GM12878 (cell line): ENCODE measurements at regions of chr11 and their contacts with region 1.

Region 1: GRCh38 chr11:46489661-46490560 is 98.3 kb upstream of the CHRM4 start:
- DNase-seq: no peak
- ATAC-seq: peak; percentile 93
- H3K4me3 ChIP-seq: no peak overlapping the region
- H3K27ac ChIP-seq: peak overlapping the region; percentile 37; the same call in 1 of the 2 replicates
- H3K4me1 ChIP-seq: peaks cover 8% of the 10 kb centered on the region
- H3K27me3 ChIP-seq: no peaks in the 10 kb centered on the region
- CTCF ChIP-seq: peak; percentile 68 to 80 (median 68)
- EP300 ChIP-seq: no peak
- POLR2A ChIP-seq: no peak
- RAD21 ChIP-seq: peak; percentile 62

Region 2: GRCh38 chr11:46200537-46201281 is 289.2 kb before region 1 on chr11:
- CTCF ChIA-PET with region 1: no interaction called
- POLR2A ChIA-PET with region 1: no interaction called
- RAD21 ChIA-PET with region 1: no interaction called
- SMC1A ChIA-PET with region 1: no interaction called
- in situ Hi-C with region 1: no loop called
- intact Hi-C with region 1: no loop called
- DNase-seq: no peak
- ATAC-seq: no peak
- H3K4me3 ChIP-seq: no peak overlapping the region
- H3K27ac ChIP-seq: no peak overlapping the region
- H3K4me1 ChIP-seq: no peaks in the 10 kb centered on the region
- H3K27me3 ChIP-seq: peaks cover 2 to 3% of the 10 kb centered on the region in 2 experiments; a peak in 3 of 4 replicates
- CTCF ChIP-seq: no peak
- EP300 ChIP-seq: no peak
- POLR2A ChIP-seq: no peak
- RAD21 ChIP-seq: no peak

Region 3: DNA sequence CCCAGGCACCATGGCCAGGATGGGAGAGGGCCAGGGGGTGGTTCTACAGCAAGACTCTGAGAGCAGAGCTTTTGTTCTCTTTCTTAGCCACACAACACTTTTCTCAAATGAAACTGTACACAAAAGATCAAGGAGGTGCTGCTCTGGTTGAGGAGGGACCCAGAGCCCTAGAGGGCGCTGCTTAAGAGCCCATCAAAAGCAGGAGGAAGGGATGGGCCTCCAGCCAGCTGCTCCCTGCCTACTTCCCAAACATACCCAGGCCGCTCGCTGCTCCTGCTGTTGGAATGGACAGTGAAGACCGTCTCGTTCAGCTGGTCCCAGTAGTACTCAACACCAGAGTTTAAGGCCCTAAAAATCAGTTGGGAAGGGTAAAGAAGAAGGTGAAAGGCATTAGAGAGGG is 79.9 kb before region 1 on chr11:
- CTCF ChIA-PET with region 1: interaction called, 6 read pairs
- POLR2A ChIA-PET with region 1: interaction called, 3 read pairs
- RAD21 ChIA-PET with region 1: interaction called, 11 read pairs
- SMC1A ChIA-PET with region 1: interaction called, 7 read pairs
- in situ Hi-C with region 1: no loop called
- intact Hi-C with region 1: no loop called
- DNase-seq: no peak
- ATAC-seq: no peak
- H3K4me3 ChIP-seq: no peak overlapping the region
- H3K27ac ChIP-seq: no peak overlapping the region
- H3K4me1 ChIP-seq: no peaks in the 10 kb centered on the region
- H3K27me3 ChIP-seq: no peaks in the 10 kb centered on the region
- CTCF ChIP-seq: peak in 1 of 3 experiments; percentile 26; a peak in 1 of 6 replicates
- EP300 ChIP-seq: no peak
- POLR2A ChIP-seq: no peak
- RAD21 ChIP-seq: peak; percentile 8; the same call in 1 of the 2 replicates

Region 4: DNA sequence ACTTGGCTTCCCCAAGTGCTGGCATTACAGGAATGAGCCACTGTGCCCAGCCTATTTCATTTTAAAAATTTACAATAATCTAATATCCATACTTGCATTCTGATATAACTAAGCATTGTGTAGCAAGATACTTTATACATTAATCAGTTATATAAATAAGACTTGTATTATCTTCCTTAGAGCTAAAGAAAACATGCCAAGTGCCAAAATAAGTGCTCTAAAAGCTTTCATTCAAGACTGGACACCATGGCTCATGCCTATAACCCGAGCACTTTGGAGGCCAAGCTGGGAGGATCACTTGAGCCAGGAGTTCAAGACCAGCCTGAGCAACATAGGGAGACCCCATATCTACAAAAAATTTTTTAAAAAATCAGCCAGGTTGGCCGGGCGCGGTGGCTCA is 20.0 kb before region 1 on chr11:
- CTCF ChIA-PET with region 1: interaction called, 4 read pairs
- POLR2A ChIA-PET with region 1: interaction called, 4 read pairs
- RAD21 ChIA-PET with region 1: no interaction called
- SMC1A ChIA-PET with region 1: interaction called, 11 read pairs
- in situ Hi-C with region 1: no loop called
- intact Hi-C with region 1: no loop called
- DNase-seq: no peak
- ATAC-seq: no peak
- H3K4me3 ChIP-seq: no peak overlapping the region
- H3K27ac ChIP-seq: no peak overlapping the region
- H3K4me1 ChIP-seq: no peaks in the 10 kb centered on the region; the same call in 1 of the 2 replicates
- H3K27me3 ChIP-seq: no peaks in the 10 kb centered on the region
- CTCF ChIP-seq: no peak
- EP300 ChIP-seq: no peak
- POLR2A ChIP-seq: no peak
- RAD21 ChIP-seq: no peak

Region 5: GRCh38 chr11:46513934-46514342 is 24.0 kb after region 1 on chr11:
- CTCF ChIA-PET with region 1: interaction called, 21 read pairs
- POLR2A ChIA-PET with region 1: interaction called, 6 read pairs
- RAD21 ChIA-PET with region 1: interaction called, 14 read pairs
- SMC1A ChIA-PET with region 1: interaction called, 27 read pairs
- in situ Hi-C with region 1: no loop called
- intact Hi-C with region 1: no loop called
- DNase-seq: no peak
- ATAC-seq: no peak
- H3K4me3 ChIP-seq: no peak overlapping the region
- H3K27ac ChIP-seq: no peak overlapping the region
- H3K4me1 ChIP-seq: no peaks in the 10 kb centered on the region
- H3K27me3 ChIP-seq: no peaks in the 10 kb centered on the region
- CTCF ChIP-seq: no peak
- EP300 ChIP-seq: no peak
- POLR2A ChIP-seq: no peak
- RAD21 ChIP-seq: no peak

Region 6: DNA sequence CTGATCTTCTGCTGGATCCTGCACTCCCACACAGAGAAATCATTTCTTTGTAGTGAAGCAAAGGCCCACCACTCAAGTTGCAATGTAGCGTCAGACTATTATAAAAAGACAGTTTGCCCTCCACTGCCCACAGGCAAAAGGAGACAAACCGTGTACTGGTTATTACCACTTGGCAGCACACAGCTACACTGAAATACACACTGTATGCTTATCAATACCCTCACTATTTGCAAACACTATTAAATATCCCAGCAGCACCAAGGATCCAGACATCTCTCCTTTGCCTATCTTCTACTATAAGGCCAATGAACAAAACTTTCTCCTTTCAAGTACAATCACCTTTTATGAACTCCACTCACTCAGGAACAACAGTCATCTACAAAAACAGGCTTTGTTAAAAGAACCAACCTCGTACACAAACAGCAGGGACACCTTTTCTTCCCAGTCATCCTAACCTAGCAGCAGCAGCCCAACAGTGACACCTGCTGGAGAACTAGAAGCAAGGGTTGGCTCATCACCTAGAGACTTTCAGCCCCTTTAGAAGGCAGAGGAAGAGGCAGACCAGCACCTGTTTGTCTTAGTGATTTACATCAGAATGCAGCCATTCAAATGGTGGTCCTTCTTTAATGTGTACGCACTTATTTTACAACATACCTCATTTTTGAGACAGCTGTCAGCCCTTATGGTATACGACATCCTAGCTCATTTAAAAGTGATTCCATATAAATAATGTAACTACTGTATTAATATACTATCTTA is 47.8 kb after region 1 on chr11:
- CTCF ChIA-PET with region 1: interaction called, 146 read pairs
- POLR2A ChIA-PET with region 1: no interaction called
- RAD21 ChIA-PET with region 1: interaction called, 15 read pairs
- SMC1A ChIA-PET with region 1: interaction called, 108 read pairs
- in situ Hi-C with region 1: no loop called
- intact Hi-C with region 1: no loop called
- DNase-seq: no peak
- ATAC-seq: peak; percentile 99
- H3K4me3 ChIP-seq: no peak overlapping the region
- H3K27ac ChIP-seq: no peak overlapping the region
- H3K4me1 ChIP-seq: no peaks in the 10 kb centered on the region
- H3K27me3 ChIP-seq: no peaks in the 10 kb centered on the region
- CTCF ChIP-seq: peak; percentile 90 to 95 (median 93); a peak in 5 of 6 replicates
- EP300 ChIP-seq: no peak
- POLR2A ChIP-seq: no peak
- RAD21 ChIP-seq: peak; percentile 95

Region 7: DNA sequence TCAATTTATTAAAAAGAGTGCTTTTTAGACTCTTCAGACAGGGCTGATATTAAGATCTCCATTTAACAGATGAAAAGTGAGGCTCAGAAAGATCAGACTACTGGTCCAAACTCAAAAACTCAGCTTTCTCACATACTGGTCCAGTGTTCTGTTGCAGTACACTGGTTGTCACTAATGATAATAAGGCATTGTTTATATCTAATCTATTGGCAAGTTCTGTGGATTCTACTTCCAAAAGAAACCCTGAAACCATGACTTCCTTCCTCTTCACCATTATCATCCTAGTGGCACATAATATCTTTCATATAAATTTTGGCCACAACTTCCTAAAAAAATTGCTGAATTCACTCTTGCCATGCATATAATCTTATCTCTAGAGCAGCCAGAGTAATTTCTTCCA is 266.1 kb after region 1 on chr11:
- CTCF ChIA-PET with region 1: no interaction called
- POLR2A ChIA-PET with region 1: no interaction called
- RAD21 ChIA-PET with region 1: no interaction called
- SMC1A ChIA-PET with region 1: no interaction called
- in situ Hi-C with region 1: no loop called
- intact Hi-C with region 1: no loop called
- DNase-seq: no peak
- ATAC-seq: no peak
- H3K4me3 ChIP-seq: no peak overlapping the region
- H3K27ac ChIP-seq: no peak overlapping the region
- H3K4me1 ChIP-seq: no peaks in the 10 kb centered on the region
- H3K27me3 ChIP-seq: no peaks in the 10 kb centered on the region
- CTCF ChIP-seq: no peak
- EP300 ChIP-seq: no peak
- POLR2A ChIP-seq: no peak
- RAD21 ChIP-seq: no peak